ENCODE measurements at regions of chr17 and their contacts with region 1.

Region 1: DNA sequence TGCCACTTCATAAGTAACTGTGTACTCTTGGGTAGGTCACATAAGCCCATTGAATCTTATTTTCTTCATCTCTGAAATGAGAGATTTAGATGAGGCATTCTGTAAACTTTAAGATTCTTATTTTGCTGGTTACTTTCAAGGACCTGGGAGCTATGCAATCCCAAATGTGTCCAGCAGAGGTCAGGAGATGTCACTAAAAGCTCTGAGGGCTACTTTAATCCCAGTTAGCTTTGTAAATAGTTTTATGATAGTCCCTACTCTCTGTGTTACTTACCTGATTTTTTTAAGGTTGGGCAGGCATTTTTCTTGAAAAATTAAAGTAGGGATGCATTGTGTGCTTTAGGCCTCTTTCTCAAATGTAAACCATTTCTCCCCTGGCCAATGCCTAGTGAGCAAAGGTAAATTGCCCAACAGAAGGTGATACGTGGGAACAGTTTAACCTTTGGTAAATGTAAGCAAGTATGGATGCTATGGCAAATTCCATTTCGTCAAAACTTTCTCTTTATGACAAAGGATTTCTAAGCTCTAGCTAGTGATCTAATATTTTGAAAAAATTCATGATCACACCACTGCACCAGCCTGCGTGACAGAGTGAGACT is 57.1 kb upstream of the WSB1 start:
- DNase-seq: peak; percentile 48
- ATAC-seq: peak; percentile 59
- H3K4me3 Mint-ChIP-seq: no peak overlapping the region
- H3K27ac Mint-ChIP-seq: no peak overlapping the region
- H3K4me1 Mint-ChIP-seq: peaks cover 54% of the 10 kb centered on the region
- H3K27me3 Mint-ChIP-seq: no peaks in the 10 kb centered on the region
- CTCF ChIP-seq: peak; percentile 97

Region 2: DNA sequence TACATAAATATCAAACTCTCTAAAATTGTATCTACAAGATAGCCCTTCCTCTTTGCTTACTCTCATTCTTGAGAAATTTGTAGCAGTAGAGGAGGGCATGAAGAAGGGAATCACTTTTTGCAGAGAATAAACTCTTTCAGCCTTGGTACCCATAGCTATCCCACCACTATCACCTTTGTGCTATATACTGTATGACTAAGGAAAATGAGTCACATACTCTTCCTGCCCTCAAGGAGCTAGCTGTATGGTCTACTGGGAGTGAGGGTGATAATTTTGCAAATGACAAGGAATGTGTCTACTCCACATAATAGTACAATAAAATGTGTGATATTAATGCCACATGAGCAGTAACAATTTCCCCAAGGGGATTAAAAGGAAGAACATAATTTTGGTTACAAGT is 127.5 kb before region 1 on chr17:
- CTCF ChIA-PET with region 1: no interaction called
- POLR2A ChIA-PET with region 1: no interaction called
- intact Hi-C with region 1: no loop called
- DNase-seq: no peak
- ATAC-seq: no peak
- H3K4me3 Mint-ChIP-seq: no peak overlapping the region
- H3K27ac Mint-ChIP-seq: no peak overlapping the region
- H3K4me1 Mint-ChIP-seq: no peaks in the 10 kb centered on the region
- H3K27me3 Mint-ChIP-seq: peaks cover 7% of the 10 kb centered on the region
- CTCF ChIP-seq: no peak

Region 3: GRCh38 chr17:27199948-27200347 is 36.9 kb before region 1 on chr17:
- CTCF ChIA-PET with region 1: interaction called, 37 read pairs
- POLR2A ChIA-PET with region 1: no interaction called
- intact Hi-C with region 1: loop called (anchors 2 kb)
- DNase-seq: no peak
- ATAC-seq: no peak
- H3K4me3 Mint-ChIP-seq: no peak overlapping the region
- H3K27ac Mint-ChIP-seq: no peak overlapping the region
- H3K4me1 Mint-ChIP-seq: no peaks in the 10 kb centered on the region
- H3K27me3 Mint-ChIP-seq: no peaks in the 10 kb centered on the region
- CTCF ChIP-seq: no peak

Region 4: GRCh38 chr17:27226615-27227230 is 10.1 kb before region 1 on chr17:
- CTCF ChIA-PET with region 1: interaction called, 26 read pairs
- POLR2A ChIA-PET with region 1: no interaction called
- intact Hi-C with region 1: no loop called
- DNase-seq: no peak
- ATAC-seq: no peak
- H3K4me3 Mint-ChIP-seq: no peak overlapping the region
- H3K27ac Mint-ChIP-seq: no peak overlapping the region
- H3K4me1 Mint-ChIP-seq: no peaks in the 10 kb centered on the region
- H3K27me3 Mint-ChIP-seq: no peaks in the 10 kb centered on the region
- CTCF ChIP-seq: no peak

Region 5: GRCh38 chr17:27332485-27333409 is 95.9 kb after region 1 on chr17:
- CTCF ChIA-PET with region 1: interaction called, 112 read pairs
- POLR2A ChIA-PET with region 1: interaction called, 33 read pairs
- intact Hi-C with region 1: loop called (anchors 1 kb)
- DNase-seq: peak; percentile 83
- ATAC-seq: peak; percentile 88
- H3K4me3 Mint-ChIP-seq: peak overlapping the region; percentile 86
- H3K27ac Mint-ChIP-seq: peak overlapping the region; percentile 87
- H3K4me1 Mint-ChIP-seq: peaks cover 36% of the 10 kb centered on the region
- H3K27me3 Mint-ChIP-seq: no peaks in the 10 kb centered on the region
- CTCF ChIP-seq: no peak

Region 6: DNA sequence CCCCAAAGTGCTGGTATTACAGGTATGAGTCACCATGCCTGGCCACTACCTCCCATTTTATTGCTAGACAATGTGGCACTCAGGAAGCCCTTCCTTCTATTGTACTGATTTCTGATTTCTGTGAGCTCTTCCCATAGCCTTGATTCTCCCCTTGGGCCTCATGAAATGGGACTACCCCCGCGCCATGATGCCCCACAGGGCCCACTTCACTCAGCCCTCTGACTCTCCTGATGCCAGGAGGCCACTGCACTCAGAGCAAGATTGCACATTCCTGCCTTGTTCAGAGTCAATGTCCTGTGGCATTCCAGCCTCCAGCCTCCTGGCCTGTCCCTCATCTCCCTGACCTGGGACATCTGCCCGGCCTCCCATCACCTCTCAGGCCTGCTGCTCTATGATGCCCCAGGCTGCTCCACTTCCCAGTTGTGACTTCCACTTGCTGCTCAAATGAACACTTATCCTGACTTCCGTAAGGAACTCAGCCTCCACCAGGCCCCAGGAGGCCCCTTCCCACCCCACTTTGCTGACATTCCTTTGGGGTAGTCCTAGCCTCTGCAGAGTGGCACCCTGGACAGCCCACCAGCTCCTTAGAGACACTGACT is 152.8 kb after region 1 on chr17:
- CTCF ChIA-PET with region 1: interaction called, 6 read pairs
- POLR2A ChIA-PET with region 1: no interaction called
- intact Hi-C with region 1: loop called (anchors 2 kb)
- DNase-seq: no peak
- ATAC-seq: no peak
- H3K4me3 Mint-ChIP-seq: no peak overlapping the region
- H3K27ac Mint-ChIP-seq: no peak overlapping the region
- H3K4me1 Mint-ChIP-seq: peaks cover 4% of the 10 kb centered on the region
- H3K27me3 Mint-ChIP-seq: peaks cover 3% of the 10 kb centered on the region
- CTCF ChIP-seq: no peak

Region 7: DNA sequence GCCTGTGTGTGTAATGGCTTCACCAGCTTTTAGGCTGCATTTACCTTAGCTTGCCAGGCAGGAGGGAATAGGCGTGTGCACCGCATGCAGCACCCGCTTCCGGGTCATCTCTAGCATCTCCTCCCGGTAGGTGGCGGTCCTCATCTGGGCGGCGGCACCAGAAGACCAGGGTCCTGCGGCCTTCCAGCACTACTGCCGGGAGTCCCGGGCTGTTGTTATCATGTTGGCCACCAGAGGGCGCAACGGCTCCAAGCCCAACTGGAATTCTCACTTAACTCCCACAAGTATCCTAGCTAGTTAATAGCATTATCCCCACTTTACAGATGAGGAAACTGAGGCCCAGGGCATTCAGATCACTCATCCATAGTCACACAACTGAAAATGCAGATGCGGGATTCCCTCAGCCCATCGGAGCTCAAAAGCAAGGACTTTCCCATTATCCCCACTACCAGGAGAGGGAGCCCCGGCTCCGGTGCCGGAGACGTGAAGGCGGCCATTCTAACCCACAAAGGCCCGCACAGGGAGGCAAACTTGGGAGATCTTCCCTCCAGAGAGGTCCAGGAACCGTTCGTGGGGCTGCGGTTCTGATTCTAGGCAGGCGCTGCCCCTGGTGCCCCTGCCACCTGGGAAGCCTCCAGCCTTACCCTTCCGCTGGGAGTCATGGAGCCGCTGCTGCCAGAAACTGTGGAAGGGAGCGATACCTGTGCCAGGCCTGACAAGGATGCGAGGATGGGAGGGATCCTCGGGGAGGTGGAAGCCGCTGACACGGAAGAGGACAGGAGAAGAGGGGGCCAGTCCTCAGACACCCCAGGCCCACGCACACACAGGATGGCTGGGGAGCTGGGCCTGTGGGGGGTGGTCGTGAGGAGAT is 418.1 kb after region 1 on chr17:
- CTCF ChIA-PET with region 1: interaction called, 8 read pairs
- POLR2A ChIA-PET with region 1: no interaction called
- intact Hi-C with region 1: loop called (anchors 2 kb)
- DNase-seq: peak; percentile 61
- ATAC-seq: peak; percentile 91
- H3K4me3 Mint-ChIP-seq: no peak overlapping the region
- H3K27ac Mint-ChIP-seq: no peak overlapping the region
- H3K4me1 Mint-ChIP-seq: peaks cover 8% of the 10 kb centered on the region
- H3K27me3 Mint-ChIP-seq: peaks cover 2% of the 10 kb centered on the region
- CTCF ChIP-seq: peak; percentile 97